GM12878 (cell line): ENCODE measurements at regions of chr3 and their contacts with region 1.

Region 1: DNA sequence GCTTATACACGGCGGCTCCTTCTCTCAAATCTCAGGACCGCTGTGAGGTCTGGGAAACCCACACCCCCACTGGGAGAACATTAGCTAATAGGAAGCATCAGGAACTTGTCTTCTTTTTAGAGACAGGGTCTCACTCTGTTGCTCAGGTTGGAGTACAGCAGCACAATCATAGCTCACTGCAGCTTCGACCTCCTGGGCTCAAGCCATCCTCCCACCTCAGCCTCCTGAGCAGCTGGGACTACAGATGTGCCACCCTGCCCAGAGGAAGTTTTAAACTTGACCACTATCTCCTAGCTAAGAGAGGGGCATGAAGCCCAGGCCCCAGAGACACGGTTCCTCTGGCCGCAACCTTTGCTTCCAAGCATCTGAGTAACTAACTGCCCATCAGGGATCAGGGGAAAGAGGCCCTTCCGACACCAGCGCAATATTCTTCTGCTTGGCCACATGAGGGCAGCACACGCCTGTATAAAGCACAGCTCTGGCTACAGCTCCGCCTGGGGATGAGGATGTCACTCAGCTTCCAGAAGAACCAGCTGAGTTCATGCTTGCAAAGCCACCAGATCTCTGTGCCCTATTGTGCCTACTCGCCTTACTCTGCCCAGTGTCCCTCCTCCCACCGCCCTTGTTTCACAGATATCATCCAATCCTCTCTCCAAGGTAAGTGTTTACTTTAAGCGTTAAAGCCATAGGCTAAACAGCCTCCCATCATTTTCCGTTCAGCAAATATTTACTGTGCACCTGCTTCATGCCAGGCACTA is 57.5 kb upstream of the SLC6A11 start:
- DNase-seq: peak; percentile 16
- ATAC-seq: peak; percentile 96
- H3K4me3 ChIP-seq: no peak overlapping the region
- H3K27ac ChIP-seq: no peak overlapping the region
- H3K4me1 ChIP-seq: no peaks in the 10 kb centered on the region
- H3K27me3 ChIP-seq: 0 out of 4 replicates have a peak, but pooled peaks cover 0 to 3% of the 10 kb centered on the region in 2 experiments
- CTCF ChIP-seq: peak; percentile 67 to 86 (median 73)
- EP300 ChIP-seq: no peak
- POLR2A ChIP-seq: no peak
- RAD21 ChIP-seq: peak; percentile 86

Region 2: DNA sequence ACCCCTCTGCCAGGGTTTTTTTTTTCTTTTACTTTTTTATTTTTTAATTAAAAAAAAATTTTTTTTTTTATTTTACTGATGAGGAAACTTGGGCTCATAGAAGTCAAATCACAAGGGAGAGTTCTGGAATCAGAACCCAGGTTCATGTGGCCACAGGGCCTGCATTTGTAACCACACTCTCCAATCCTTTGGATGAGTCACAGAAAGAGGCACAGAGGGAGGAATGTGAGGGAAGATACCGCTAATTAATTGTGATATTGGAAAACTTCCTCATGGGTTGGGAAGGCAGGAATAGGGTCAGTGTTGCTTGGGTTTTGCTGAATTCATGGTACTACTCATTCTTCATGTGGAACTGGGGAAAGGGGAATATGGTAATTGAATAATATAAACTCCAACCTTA is 75.4 kb before region 1 on chr3:
- CTCF ChIA-PET with region 1: no interaction called
- POLR2A ChIA-PET with region 1: no interaction called
- RAD21 ChIA-PET with region 1: no interaction called
- SMC1A ChIA-PET with region 1: no interaction called
- in situ Hi-C with region 1: no loop called
- intact Hi-C with region 1: no loop called
- DNase-seq: no peak
- ATAC-seq: no peak
- H3K4me3 ChIP-seq: no peak overlapping the region
- H3K27ac ChIP-seq: no peak overlapping the region
- H3K4me1 ChIP-seq: no peaks in the 10 kb centered on the region
- H3K27me3 ChIP-seq: peaks cover 0 to 1% of the 10 kb centered on the region in 2 experiments; a peak in 2 of 4 replicates
- CTCF ChIP-seq: no peak
- EP300 ChIP-seq: no peak
- POLR2A ChIP-seq: no peak
- RAD21 ChIP-seq: no peak

Region 3: DNA sequence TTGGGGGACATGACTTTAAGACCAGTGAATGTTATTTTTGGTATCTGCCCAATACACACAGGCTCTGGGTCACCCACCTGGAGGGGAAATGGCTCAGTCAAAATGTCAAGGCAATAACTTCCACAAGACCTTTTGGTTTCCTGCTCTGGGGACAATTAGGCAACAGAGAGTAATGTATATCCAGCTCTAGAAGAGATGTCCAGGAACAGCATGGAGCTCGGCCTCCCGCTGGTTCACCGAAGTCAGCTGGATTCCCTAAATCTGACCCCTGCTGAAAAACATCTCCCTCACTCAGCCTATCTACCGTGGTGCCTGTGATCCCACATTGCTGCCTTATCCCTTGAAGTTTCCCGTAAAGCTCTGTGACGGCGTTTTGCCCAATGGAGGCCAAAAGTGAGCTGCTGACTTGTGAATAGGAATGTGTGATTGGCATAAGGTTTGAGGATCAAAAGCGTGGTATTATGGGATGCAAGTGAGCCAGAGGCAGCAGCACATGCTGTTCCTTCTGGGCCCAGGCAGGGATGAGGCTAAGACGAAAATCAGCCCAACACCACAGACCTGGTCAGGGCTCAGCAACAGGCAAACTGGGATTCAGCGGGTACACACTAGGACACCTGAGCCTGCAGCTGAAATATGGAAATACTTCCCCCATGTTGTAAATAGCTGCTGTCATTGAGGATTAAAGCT is 10.4 kb after region 1 on chr3:
- CTCF ChIA-PET with region 1: interaction called, 26 read pairs
- POLR2A ChIA-PET with region 1: no interaction called
- RAD21 ChIA-PET with region 1: no interaction called
- SMC1A ChIA-PET with region 1: interaction called, 3 read pairs
- in situ Hi-C with region 1: no loop called
- intact Hi-C with region 1: no loop called
- DNase-seq: no peak
- ATAC-seq: no peak
- H3K4me3 ChIP-seq: no peak overlapping the region
- H3K27ac ChIP-seq: no peak overlapping the region
- H3K4me1 ChIP-seq: no peaks in the 10 kb centered on the region
- H3K27me3 ChIP-seq: no peaks in the 10 kb centered on the region
- CTCF ChIP-seq: no peak
- EP300 ChIP-seq: no peak
- POLR2A ChIP-seq: no peak
- RAD21 ChIP-seq: no peak

Region 4: DNA sequence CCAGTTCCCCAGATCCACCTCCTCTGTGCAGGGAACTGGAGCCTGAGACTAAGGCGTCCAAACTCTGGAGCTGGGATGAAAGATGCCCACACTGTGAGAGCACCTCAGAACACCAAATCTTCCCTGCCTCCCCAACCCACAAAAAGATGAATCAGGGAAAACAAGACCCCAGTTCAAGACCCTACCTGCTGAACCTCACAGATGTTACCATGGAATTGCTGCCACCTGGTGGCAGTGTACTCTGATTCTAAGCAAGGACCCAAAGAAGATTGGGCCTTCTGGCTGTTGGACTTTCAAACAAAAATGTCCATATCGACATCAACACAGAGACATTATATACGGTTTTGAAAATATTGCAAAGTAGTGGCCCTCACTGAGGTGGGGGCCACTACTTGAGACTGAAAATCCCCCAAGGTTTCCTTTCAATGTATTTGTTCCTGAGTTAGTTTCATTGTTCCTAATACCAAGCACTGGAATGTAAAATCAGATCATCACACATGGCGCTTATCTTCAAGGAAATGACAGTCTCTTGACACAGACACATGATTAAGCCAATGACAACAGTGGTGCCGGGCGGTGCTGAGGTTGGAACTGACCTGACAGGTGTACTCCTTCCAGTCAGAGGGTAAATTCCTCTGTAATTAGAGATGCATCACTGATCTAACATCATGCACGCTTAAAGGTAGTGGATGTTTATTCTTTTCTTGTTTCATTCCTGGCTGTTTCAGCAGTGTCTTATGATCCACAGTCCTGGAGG is 125.2 kb after region 1 on chr3:
- CTCF ChIA-PET with region 1: interaction called, 8 read pairs
- POLR2A ChIA-PET with region 1: no interaction called
- RAD21 ChIA-PET with region 1: interaction called, 3 read pairs
- SMC1A ChIA-PET with region 1: interaction called, 3 read pairs
- in situ Hi-C with region 1: no loop called
- intact Hi-C with region 1: loop called (anchors 1 kb)
- DNase-seq: no peak
- ATAC-seq: no peak
- H3K4me3 ChIP-seq: no peak overlapping the region
- H3K27ac ChIP-seq: no peak overlapping the region
- H3K4me1 ChIP-seq: no peaks in the 10 kb centered on the region
- H3K27me3 ChIP-seq: peaks cover 2% of the 10 kb centered on the region in 2 experiments; a peak in 3 of 4 replicates
- CTCF ChIP-seq: peak; percentile 38 to 56 (median 48); a peak in 5 of 6 replicates
- EP300 ChIP-seq: no peak
- POLR2A ChIP-seq: no peak
- RAD21 ChIP-seq: 0 out of 2 replicates have a peak, but pooled peaks have one; percentile 40

Region 5: DNA sequence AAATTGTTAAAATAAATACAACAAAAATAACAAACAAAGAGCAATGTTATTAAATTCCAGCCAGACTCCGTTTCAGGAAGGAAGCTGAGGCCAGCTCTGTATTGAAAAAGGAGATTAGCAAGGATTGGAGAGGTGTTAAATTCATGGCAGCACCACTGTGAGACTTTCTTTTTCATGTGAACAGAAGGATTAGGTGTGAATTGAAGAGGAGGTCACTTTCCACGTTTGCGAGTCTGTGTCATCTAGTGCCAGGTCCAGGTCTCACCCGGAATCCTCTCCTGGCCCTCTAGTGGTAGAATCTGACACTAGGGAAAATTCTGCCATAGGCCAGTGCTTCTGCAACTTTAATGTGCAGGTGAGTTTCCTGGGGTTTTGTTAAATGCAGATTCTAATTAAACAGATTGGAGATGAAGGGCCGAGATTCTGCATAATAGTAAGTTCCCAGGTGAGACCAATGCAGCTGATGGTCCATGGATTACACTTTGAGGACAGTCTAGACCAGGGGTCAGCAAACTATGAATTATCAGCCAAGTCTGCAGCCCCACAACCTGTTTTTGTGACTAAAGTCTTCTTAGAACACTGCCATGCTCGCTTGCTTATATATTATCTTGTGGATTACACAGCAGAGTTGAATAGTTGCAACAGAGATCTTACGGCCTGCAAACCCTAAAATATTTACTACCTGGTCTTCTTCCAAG is 224.9 kb after region 1 on chr3:
- CTCF ChIA-PET with region 1: interaction called, 16 read pairs
- POLR2A ChIA-PET with region 1: no interaction called
- RAD21 ChIA-PET with region 1: no interaction called
- SMC1A ChIA-PET with region 1: no interaction called
- in situ Hi-C with region 1: no loop called
- intact Hi-C with region 1: no loop called
- DNase-seq: no peak
- ATAC-seq: peak; percentile 76
- H3K4me3 ChIP-seq: no peak overlapping the region
- H3K27ac ChIP-seq: no peak overlapping the region
- H3K4me1 ChIP-seq: no peaks in the 10 kb centered on the region
- H3K27me3 ChIP-seq: no peaks in the 10 kb centered on the region
- CTCF ChIP-seq: peak; percentile 60 to 79 (median 76)
- EP300 ChIP-seq: no peak
- POLR2A ChIP-seq: no peak
- RAD21 ChIP-seq: peak; percentile 46; the same call in 1 of the 2 replicates